ENCODE measurements at regions of chr22 and their contacts with region 1.

Region 1: GRCh38 chr22:20298803-20299735 is 20.8 kb downstream of the DGCR6L start:
- DNase-seq: peak; percentile 97
- H3K4me3 Mint-ChIP-seq: peak overlapping the region; percentile 90
- H3K27ac Mint-ChIP-seq: peak overlapping the region; percentile 75
- H3K4me1 Mint-ChIP-seq: peaks cover 4% of the 10 kb centered on the region
- H3K27me3 Mint-ChIP-seq: peaks cover 32% of the 10 kb centered on the region

Region 2: DNA sequence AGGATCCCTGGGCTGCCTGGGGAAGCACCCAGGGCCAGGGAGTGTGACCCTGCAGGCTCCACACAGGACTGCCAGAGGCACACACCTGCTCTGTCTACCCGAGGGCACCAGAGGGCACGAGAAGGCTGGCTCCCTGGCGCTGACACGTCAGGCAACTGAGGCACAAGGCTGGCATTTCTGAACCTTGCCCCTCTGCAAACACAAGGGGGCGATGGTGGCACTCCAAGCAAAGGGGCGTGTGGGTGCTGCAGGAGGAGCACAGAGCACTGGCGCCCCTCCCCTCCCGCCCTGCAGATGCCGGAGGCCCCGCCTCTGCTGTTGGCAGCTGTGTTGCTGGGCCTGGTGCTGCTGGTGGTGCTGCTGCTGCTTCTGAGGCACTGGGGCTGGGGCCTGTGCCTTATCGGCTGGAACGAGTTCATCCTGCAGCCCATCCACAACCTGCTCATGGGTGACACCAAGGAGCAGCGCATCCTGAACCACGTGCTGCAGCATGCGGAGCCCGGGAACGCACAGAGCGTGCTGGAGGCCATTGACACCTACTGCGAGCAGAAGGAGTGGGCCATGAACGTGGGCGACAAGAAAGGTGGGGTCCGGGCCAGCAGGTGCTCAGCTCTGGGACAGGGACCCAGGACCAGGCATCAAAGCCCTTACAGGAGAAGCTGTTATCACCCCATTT is 336.7 kb before region 1 on chr22:
- intact Hi-C with region 1: loop called (anchors 10 kb)
- DNase-seq: peak; percentile 85
- H3K4me3 Mint-ChIP-seq: no peak overlapping the region
- H3K27ac Mint-ChIP-seq: no peak overlapping the region
- H3K4me1 Mint-ChIP-seq: peaks cover 2% of the 10 kb centered on the region
- H3K27me3 Mint-ChIP-seq: no peaks in the 10 kb centered on the region

Region 3: DNA sequence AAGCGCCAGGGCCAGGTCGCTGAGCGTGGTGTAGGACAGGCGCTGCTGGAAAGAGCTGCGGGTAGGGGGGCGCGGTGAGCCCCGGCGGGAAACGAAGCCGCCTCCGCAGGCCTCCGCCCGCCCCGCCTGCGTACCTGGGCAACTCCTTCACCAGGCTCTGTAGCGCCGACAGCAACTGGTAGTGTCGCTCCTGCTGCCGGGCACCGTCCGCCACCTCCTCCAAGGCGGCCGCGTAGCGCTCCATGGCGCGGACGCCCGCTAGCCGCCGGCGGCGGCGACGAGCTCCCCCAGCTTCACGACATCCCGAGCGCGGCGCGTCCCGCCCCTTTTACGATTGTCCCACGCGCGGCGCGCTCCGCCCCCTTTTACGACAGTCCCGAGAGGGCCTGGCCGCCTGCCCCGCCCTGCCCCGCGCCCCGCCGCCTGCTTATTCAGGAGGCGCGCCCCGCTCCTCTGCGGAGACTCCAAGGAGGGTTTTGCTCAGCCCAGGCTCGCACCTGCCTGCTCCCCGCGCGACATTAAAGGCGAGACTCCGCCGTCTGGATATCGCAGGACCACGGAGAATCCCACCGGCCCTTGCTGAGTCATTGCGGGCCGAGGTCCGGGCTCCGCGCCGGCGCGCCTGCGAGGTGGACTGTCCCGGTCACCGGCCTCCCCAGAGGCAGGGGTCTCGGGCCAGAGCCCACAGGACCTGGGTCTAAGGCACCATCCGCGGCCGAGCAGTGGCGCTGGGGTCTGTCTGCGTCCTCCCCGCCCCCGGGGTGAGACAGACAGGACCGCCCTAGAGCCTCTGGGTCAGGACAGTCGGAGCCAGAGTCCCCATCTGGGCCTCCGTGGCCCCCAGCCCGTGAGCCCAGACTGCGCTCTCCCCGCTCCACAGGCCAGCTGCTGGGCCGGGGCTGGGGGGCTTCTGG is 20.9 kb after region 1 on chr22 and contains the start of gene DGCR6L:
- intact Hi-C with region 1: loop called (anchors 1 kb)
- DNase-seq: peak; percentile 99
- H3K4me3 Mint-ChIP-seq: peak within 1 kb of the TSS; percentile 97
- H3K27ac Mint-ChIP-seq: peak within 1 kb of the TSS; percentile 84
- H3K4me1 Mint-ChIP-seq: peaks cover 50% of the 10 kb centered on the region
- H3K27me3 Mint-ChIP-seq: no peaks in the 10 kb centered on the region
- total RNA-seq, gene DGCR6L: 37.2 TPM in 2 replicates

Measured in activated CD4-positive, alpha-beta T cell treated with anti-CD3 and anti-CD28 coated beads, Interleukin-2, amount 10 ng/mL, durations not matched to agents 24 days and 14 days (primary cell).